OCI-LY7 (cell line): ENCODE measurements at regions of chr1 and their contacts with region 1.

Region 1: GRCh38 chr1:161399257-161399998 is 31.8 kb upstream of the CFAP126 start:
- DNase-seq: peak; percentile 97
- H3K4me3 ChIP-seq: peak overlapping the region; percentile 83
- H3K27ac ChIP-seq: peak overlapping the region; percentile 94
- H3K4me1 ChIP-seq: peaks cover 17% of the 10 kb centered on the region
- CTCF ChIP-seq: peak; percentile 82

Region 2: GRCh38 chr1:161238039-161238473 is 161.4 kb before region 1 on chr1 and contains the start of gene NR1I3:
- CTCF ChIA-PET with region 1: no interaction called
- POLR2A ChIA-PET with region 1: no interaction called
- intact Hi-C with region 1: no loop called
- DNase-seq: no peak
- H3K4me3 ChIP-seq: no peak within 1 kb of the TSS
- H3K27ac ChIP-seq: no peak within 1 kb of the TSS
- H3K4me1 ChIP-seq: no peaks in the 10 kb centered on the region
- CTCF ChIP-seq: no peak
- total RNA-seq, gene NR1I3: not detected in 2 replicates

Region 3: GRCh38 chr1:161274874-161275273 is 124.6 kb before region 1 on chr1:
- CTCF ChIA-PET with region 1: no interaction called
- POLR2A ChIA-PET with region 1: no interaction called
- intact Hi-C with region 1: no loop called
- DNase-seq: no peak
- H3K4me3 ChIP-seq: no peak overlapping the region
- H3K27ac ChIP-seq: no peak overlapping the region
- H3K4me1 ChIP-seq: no peaks in the 10 kb centered on the region
- CTCF ChIP-seq: no peak

Region 4: DNA sequence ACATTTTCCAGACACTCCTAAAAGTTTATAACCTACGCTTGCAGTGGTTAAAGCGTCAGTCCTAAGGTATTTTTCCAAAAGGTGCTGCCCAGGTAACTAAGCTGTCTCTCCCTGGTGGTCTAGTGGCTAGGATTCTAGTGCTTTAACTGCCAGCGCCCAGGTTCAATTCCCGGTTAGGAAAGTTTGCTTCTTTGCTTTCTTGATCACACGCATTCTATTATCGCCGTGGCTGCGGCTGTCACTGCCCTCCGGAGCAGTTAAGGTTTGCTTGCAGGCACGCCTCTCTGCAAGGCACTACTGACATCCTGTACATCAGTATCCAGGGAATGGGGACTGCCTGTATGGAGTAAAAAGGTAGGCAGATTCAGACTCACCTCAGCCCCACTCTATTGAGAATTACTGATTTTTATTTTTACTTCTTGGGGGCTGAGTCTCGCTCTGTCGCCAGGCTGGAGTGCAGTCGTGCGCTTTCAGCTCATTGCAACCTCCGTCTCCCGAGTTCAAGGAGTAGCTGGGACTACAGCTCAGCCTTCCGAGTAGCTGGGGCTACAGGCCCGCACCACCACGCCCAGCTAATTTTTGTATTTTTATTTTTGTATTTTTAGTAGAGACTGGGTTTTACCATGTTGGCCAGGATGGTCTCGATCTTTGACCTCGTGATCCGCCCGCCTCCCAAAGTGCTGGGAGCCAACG is 21.5 kb after region 1 on chr1:
- CTCF ChIA-PET with region 1: no interaction called
- POLR2A ChIA-PET with region 1: interaction called, 12 read pairs
- intact Hi-C with region 1: loop called (anchors 1 kb)
- DNase-seq: peak; percentile 57
- H3K4me3 ChIP-seq: peak overlapping the region; percentile 67
- H3K27ac ChIP-seq: peak overlapping the region; percentile 89
- H3K4me1 ChIP-seq: peaks cover 35% of the 10 kb centered on the region
- CTCF ChIP-seq: no peak

Region 5: GRCh38 chr1:161440312-161440894 is 41.0 kb after region 1 on chr1:
- CTCF ChIA-PET with region 1: no interaction called
- POLR2A ChIA-PET with region 1: no interaction called
- intact Hi-C with region 1: loop called (anchors 10 kb)
- DNase-seq: peak; percentile 88
- H3K4me3 ChIP-seq: peak overlapping the region; percentile 72
- H3K27ac ChIP-seq: peak overlapping the region; percentile 68
- H3K4me1 ChIP-seq: peaks cover 6% of the 10 kb centered on the region
- CTCF ChIP-seq: peak; percentile 78